HEK293 (cell line): ENCODE measurements at regions of chr14 and their contacts with region 1.

Region 1: GRCh38 chr14:63276492-63277342 is 42.0 kb downstream of the GPHB5 start:
- H3K4me3 ChIP-seq: no peak overlapping the region
- H3K27ac ChIP-seq: no peak overlapping the region
- H3K4me1 ChIP-seq: no peaks in the 10 kb centered on the region
- CTCF ChIP-seq: peak; percentile 66; the same call in 1 of the 2 replicates

Region 2: GRCh38 chr14:63174760-63175211 is 101.9 kb before region 1 on chr14:
- CTCF ChIA-PET with region 1: interaction called, 29 read pairs
- POLR2A ChIA-PET with region 1: no interaction called
- H3K4me3 ChIP-seq: no peak overlapping the region
- H3K27ac ChIP-seq: no peak overlapping the region
- H3K4me1 ChIP-seq: no peaks in the 10 kb centered on the region
- CTCF ChIP-seq: no peak

Region 3: DNA sequence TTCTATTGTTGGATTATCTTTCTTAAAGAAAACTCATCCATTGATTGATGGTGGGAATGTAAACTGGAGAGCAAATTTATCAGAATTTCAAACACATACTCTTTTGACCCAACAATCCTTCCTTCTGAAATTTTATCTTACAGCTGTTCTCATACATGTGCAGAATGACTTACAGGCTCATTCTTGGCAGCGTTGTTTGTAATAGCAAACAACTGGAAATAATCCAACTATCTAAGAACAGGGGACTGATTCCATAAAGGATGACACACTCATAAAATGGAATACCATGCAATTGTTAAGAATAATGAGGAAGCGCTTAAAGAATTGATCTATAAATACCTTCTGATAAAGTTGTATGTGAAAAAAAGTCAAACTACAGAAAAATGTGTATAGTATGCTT is 48.5 kb before region 1 on chr14:
- CTCF ChIA-PET with region 1: no interaction called
- POLR2A ChIA-PET with region 1: no interaction called
- H3K4me3 ChIP-seq: no peak overlapping the region
- H3K27ac ChIP-seq: no peak overlapping the region
- H3K4me1 ChIP-seq: 0 out of 2 replicates have a peak, but pooled peaks cover 5% of the 10 kb centered on the region
- CTCF ChIP-seq: no peak

Region 4: GRCh38 chr14:63287746-63288473 is 11.2 kb after region 1 on chr14:
- CTCF ChIA-PET with region 1: no interaction called
- POLR2A ChIA-PET with region 1: no interaction called
- H3K4me3 ChIP-seq: no peak overlapping the region
- H3K27ac ChIP-seq: no peak overlapping the region
- H3K4me1 ChIP-seq: peaks cover 5% of the 10 kb centered on the region; the same call in 1 of the 2 replicates
- CTCF ChIP-seq: no peak

Region 5: DNA sequence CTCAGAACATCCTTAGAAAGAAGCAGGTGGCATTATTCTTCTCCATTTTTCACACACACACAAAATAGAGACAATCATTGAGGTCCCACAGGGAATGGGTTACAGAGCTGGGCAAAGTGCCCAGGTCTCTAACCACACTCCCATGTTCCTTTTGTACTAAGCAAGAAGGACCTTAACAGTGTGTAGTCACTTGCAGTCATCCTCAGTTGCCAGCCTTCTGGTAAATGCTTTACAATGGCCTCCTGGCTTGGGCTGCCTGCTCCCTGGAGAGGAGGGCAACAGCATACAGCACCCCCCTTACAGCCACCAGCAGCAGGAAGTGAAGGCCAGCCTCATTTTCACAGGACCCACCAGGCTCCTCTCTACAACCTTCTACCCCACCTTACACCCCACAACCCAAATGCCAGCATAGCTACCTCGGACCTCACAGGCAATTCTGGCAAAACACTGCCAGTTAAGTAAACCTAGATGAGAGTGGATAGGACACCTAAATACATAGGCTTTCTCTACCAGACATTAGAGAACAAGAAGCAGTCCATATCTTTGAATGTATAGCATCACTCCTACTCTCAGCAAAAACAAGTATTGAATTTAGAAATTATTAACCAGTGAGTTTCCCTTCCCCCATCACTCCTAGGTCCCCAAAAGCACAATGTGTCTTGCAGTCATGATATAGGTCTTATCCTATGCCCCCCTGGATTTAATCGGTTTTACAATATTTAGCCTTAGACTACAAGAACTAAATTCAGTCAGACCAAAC is 178.3 kb after region 1 on chr14:
- CTCF ChIA-PET with region 1: no interaction called
- POLR2A ChIA-PET with region 1: no interaction called
- H3K4me3 ChIP-seq: no peak overlapping the region
- H3K27ac ChIP-seq: no peak overlapping the region
- H3K4me1 ChIP-seq: peaks cover 3% of the 10 kb centered on the region; the same call in 1 of the 2 replicates
- CTCF ChIP-seq: no peak